Activated B cell treated with CpG ODN at 0.5 μM for 24 hours (primary cell): ENCODE measurements at regions of chr1 and their contacts with region 1.

Region 1: DNA sequence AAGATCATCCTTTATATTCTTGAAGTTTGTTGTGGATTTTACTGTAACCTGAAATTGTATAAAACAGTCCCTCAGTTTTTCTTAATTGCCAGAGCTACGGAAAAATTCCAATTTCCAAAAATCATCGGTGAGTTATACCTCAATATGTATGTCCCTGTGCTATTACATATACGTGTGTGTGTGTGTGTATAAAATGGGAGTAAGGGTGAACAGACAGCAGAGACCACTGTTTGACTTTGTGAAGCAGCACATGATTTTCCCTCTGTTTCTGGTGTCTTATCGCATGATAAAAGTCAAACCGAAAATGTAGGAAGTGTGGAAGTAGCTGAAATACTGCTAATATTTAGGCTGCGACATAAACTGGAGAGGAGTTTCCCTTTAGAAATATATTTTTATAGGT is 1.2 kb downstream of the OR2T1 start:
- DNase-seq: no peak
- ATAC-seq: no peak
- H3K4me3 Mint-ChIP-seq: no peak overlapping the region
- H3K27ac Mint-ChIP-seq: peak overlapping the region; percentile 0
- H3K4me1 Mint-ChIP-seq: no peaks in the 10 kb centered on the region
- H3K27me3 Mint-ChIP-seq: no peaks in the 10 kb centered on the region
- CTCF ChIP-seq: no peak

Region 2: GRCh38 chr1:248316796-248317195 is 87.2 kb before region 1 on chr1:
- CTCF ChIA-PET with region 1: no interaction called
- POLR2A ChIA-PET with region 1: no interaction called
- intact Hi-C with region 1: no loop called
- DNase-seq: no peak
- ATAC-seq: no peak
- H3K4me3 Mint-ChIP-seq: no peak overlapping the region
- H3K27ac Mint-ChIP-seq: no peak overlapping the region
- H3K4me1 Mint-ChIP-seq: no peaks in the 10 kb centered on the region
- H3K27me3 Mint-ChIP-seq: peaks cover 6% of the 10 kb centered on the region
- CTCF ChIP-seq: no peak

Region 3: DNA sequence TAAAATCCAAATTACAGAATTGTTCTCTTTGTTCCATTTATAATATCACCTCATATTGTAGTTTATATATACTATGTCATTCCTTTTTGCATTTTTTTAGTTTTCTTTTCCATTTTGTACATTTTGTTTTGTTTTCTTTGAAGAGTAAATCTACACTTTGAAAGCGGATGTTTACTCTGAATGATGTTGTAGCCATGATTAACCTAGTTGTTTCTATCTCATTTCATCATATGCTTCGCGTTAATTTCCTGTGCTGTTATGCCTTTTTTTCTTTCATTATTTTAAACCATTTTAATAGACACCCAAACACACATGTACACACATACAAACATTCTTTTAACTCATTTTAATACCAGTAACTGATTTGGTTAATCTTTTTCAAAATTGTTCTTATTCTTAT is 23.2 kb before region 1 on chr1:
- CTCF ChIA-PET with region 1: no interaction called
- POLR2A ChIA-PET with region 1: no interaction called
- intact Hi-C with region 1: no loop called
- DNase-seq: no peak
- ATAC-seq: no peak
- H3K4me3 Mint-ChIP-seq: no peak overlapping the region
- H3K27ac Mint-ChIP-seq: no peak overlapping the region
- H3K4me1 Mint-ChIP-seq: no peaks in the 10 kb centered on the region
- H3K27me3 Mint-ChIP-seq: no peaks in the 10 kb centered on the region
- CTCF ChIP-seq: no peak

Region 4: GRCh38 chr1:248686815-248687214 is 282.8 kb after region 1 on chr1:
- CTCF ChIA-PET with region 1: interaction called, 4 read pairs
- POLR2A ChIA-PET with region 1: no interaction called
- intact Hi-C with region 1: loop called (anchors 1 kb)
- DNase-seq: no peak
- ATAC-seq: peak; percentile 36
- H3K4me3 Mint-ChIP-seq: peak overlapping the region; percentile 2
- H3K27ac Mint-ChIP-seq: no peak overlapping the region
- H3K4me1 Mint-ChIP-seq: peaks cover 37% of the 10 kb centered on the region
- H3K27me3 Mint-ChIP-seq: peaks cover 3% of the 10 kb centered on the region
- CTCF ChIP-seq: no peak